ENCODE measurements at regions of chr4 and their contacts with region 1.

Region 1: GRCh38 chr4:48079972-48080391 is 54.1 kb downstream of the TXK start:
- DNase-seq: no peak
- ATAC-seq: no peak
- H3K4me3 ChIP-seq: no peak overlapping the region
- H3K27ac ChIP-seq: no peak overlapping the region
- H3K4me1 ChIP-seq: no peaks in the 10 kb centered on the region
- H3K27me3 ChIP-seq: peaks cover 0 to 13% (median 0%) of the 10 kb centered on the region in 7 donors
- CTCF ChIP-seq: no peak

Region 2: GRCh38 chr4:47926639-47927258 is 153.2 kb before region 1 on chr4:
- intact Hi-C with region 1: loop called in 6 of 10 experiments (anchors 5 to 10 kb)
- DNase-seq: peak; percentile 17 to 41
- ATAC-seq: peak in 7 of 8 donors; percentile 64 to 87 (median 80)
- H3K4me3 ChIP-seq: peak overlapping the region in 3 of 10 donors; percentile 12 to 21 (median 19)
- H3K27ac ChIP-seq: no peak overlapping the region
- H3K4me1 ChIP-seq: peaks cover 0 to 17% (median 6%) of the 10 kb centered on the region in 9 donors
- H3K27me3 ChIP-seq: peaks cover 0 to 32% (median 12%) of the 10 kb centered on the region in 7 donors
- CTCF ChIP-seq: peak in 8 of 9 donors; percentile 35 to 73 (median 62)

Region 3: GRCh38 chr4:48016141-48017103 is 63.6 kb before region 1 on chr4 and contains the starts of genes CNGA1 and NIPAL1:
- intact Hi-C with region 1: loop called in 5 of 10 experiments (anchors 5 kb)
- DNase-seq: peak; percentile 50 to 70
- ATAC-seq: peak; percentile 94 to 99 (median 97)
- H3K4me3 ChIP-seq: peak within 1 kb of the TSS; percentile 53 to 69 (median 62)
- H3K27ac ChIP-seq: peak within 1 kb of the TSS in 4 of 10 donors; percentile 18 to 59 (median 46)
- H3K4me1 ChIP-seq: peaks cover 0 to 20% (median 10%) of the 10 kb centered on the region in 9 donors
- H3K27me3 ChIP-seq: peaks cover 0 to 42% (median 26%) of the 10 kb centered on the region in 7 donors
- CTCF ChIP-seq: peak in 6 of 9 donors; percentile 28 to 53 (median 42)
- total RNA-seq, gene CNGA1: 0.11 to 1.6 (median 0.37) TPM in 7 of 10 donors, not detected in the others
- total RNA-seq, gene NIPAL1: 0.04 to 1.4 (median 0.45) TPM

Region 4: DNA sequence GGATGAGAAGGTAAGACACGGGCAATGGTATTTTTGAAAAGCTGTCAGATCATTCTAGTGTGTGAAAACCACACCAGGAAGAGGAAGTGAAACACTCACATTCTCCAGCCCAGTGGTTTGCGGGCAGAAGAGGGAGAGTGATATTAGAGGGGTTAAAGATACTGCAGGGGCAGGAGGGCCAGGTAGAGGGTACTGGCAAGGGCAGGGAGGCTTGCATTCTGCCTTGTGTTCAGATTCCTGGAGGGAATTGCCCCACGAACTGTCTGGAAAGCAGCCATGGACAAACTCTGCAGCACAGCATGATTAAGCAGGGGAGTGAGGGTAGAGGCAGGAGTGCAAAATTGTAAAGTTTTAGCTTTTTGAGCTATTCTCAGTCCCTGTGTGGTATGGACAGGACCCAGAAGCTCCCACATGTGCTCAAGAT is 32.5 kb before region 1 on chr4:
- intact Hi-C with region 1: loop called in 1 of 10 experiments (anchors 5 kb)
- DNase-seq: no peak
- ATAC-seq: peak in 7 of 8 donors; percentile 14 to 52 (median 40)
- H3K4me3 ChIP-seq: no peak overlapping the region
- H3K27ac ChIP-seq: peak overlapping the region in 9 of 10 donors; percentile 4 to 61 (median 21)
- H3K4me1 ChIP-seq: peaks cover 0 to 25% (median 6%) of the 10 kb centered on the region in 9 donors
- H3K27me3 ChIP-seq: peaks cover 0 to 80% (median 0%) of the 10 kb centered on the region in 7 donors
- CTCF ChIP-seq: no peak

Region 5: GRCh38 chr4:48307528-48307927 is 227.5 kb after region 1 on chr4:
- intact Hi-C with region 1: no loop called
- DNase-seq: no peak
- ATAC-seq: no peak
- H3K4me3 ChIP-seq: no peak overlapping the region
- H3K27ac ChIP-seq: no peak overlapping the region
- H3K4me1 ChIP-seq: no peaks in the 10 kb centered on the region
- H3K27me3 ChIP-seq: no peaks in the 10 kb centered on the region
- CTCF ChIP-seq: no peak

Measured in heart right ventricle (tissue), 16 donors.